ENCODE measurements at regions of chr15 and their contacts with region 1.

Region 1: GRCh38 chr15:90839187-90840071 is 29.0 kb upstream of the FURIN start:
- DNase-seq: no peak
- ATAC-seq: peak; percentile 62
- H3K4me3 Mint-ChIP-seq: peak overlapping the region; percentile 55
- H3K27ac Mint-ChIP-seq: no peak overlapping the region
- H3K4me1 Mint-ChIP-seq: peaks cover 45% of the 10 kb centered on the region
- H3K27me3 Mint-ChIP-seq: no peaks in the 10 kb centered on the region
- CTCF ChIP-seq: no peak

Region 2: DNA sequence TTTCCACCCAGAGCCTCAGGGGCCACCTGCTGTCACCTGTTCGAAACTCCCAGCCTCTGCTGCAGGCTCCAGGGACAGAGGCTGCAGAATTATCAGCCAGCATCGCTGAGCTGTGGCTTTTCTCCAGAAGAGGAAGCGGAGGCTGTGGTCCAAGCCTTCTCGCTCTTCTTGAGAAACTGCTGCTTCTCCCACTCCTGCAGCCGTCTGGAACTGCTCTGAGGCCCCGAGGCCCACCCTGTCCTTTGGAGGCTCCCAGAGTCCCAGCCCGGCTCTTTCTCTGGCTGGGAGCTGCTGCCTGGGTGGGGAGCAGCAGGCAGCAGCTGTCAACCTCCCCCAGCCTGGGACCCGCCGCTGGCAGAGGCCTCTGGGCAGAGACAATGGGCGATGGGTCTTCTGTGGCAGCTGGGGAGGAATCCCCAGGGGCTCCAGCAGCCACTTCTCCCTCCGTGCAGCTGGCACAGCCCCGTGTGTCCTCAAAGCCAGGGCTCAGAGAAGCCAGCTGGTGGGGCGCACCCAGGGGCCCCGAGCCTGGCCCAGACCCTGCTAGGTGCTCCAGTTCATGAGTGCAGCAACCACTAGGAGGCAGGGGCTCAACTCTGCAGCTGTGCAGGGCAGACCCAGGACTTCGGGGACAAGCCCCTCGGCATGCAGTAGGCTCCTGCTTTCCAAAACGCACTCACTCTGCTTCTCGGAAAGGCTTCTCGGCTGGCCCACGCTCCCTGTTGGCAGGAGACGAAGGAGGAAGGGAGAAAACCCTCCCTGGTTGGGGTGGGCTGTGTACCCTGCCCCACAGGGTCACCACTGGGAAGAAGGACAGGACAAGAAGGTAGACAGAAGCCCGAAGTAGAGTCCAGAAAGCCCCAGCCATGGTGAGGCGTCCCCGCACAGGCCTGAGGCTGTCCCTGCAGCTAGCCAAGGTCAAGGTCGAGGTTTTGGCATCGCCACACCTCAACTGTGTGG is 20.9 kb before region 1 on chr15:
- CTCF ChIA-PET with region 1: interaction called, 3 read pairs
- POLR2A ChIA-PET with region 1: interaction called, 15 read pairs
- intact Hi-C with region 1: no loop called
- DNase-seq: peak; percentile 60
- ATAC-seq: peak; percentile 95
- H3K4me3 Mint-ChIP-seq: peak overlapping the region; percentile 41
- H3K27ac Mint-ChIP-seq: peak overlapping the region; percentile 66
- H3K4me1 Mint-ChIP-seq: peaks cover 46% of the 10 kb centered on the region
- H3K27me3 Mint-ChIP-seq: no peaks in the 10 kb centered on the region
- CTCF ChIP-seq: no peak

Region 3: GRCh38 chr15:90851114-90851513 is 11.7 kb after region 1 on chr15:
- CTCF ChIA-PET with region 1: no interaction called
- POLR2A ChIA-PET with region 1: interaction called, 21 read pairs
- intact Hi-C with region 1: loop called (anchors 2 kb)
- DNase-seq: no peak
- ATAC-seq: no peak
- H3K4me3 Mint-ChIP-seq: peak overlapping the region; percentile 53
- H3K27ac Mint-ChIP-seq: no peak overlapping the region
- H3K4me1 Mint-ChIP-seq: peaks cover 57% of the 10 kb centered on the region
- H3K27me3 Mint-ChIP-seq: no peaks in the 10 kb centered on the region
- CTCF ChIP-seq: no peak

Region 4: GRCh38 chr15:90954712-90955671 is 115.6 kb after region 1 on chr15 and contains the start of gene RCCD1:
- CTCF ChIA-PET with region 1: no interaction called
- POLR2A ChIA-PET with region 1: no interaction called
- intact Hi-C with region 1: no loop called
- DNase-seq: peak; percentile 83
- ATAC-seq: peak; percentile 94
- H3K4me3 Mint-ChIP-seq: peak within 1 kb of the TSS; percentile 88
- H3K27ac Mint-ChIP-seq: peak within 1 kb of the TSS; percentile 92
- H3K4me1 Mint-ChIP-seq: peaks cover 21% of the 10 kb centered on the region
- H3K27me3 Mint-ChIP-seq: no peaks in the 10 kb centered on the region
- CTCF ChIP-seq: no peak
- total RNA-seq, gene RCCD1: 15.7 and 19.3 TPM in 2 replicates

Measured in activated B cell treated with CpG ODN at 0.5 μM for 24 hours (primary cell).